HCT116 (cell line): ENCODE measurements at regions of chr6 and their contacts with region 1.

Region 1: DNA sequence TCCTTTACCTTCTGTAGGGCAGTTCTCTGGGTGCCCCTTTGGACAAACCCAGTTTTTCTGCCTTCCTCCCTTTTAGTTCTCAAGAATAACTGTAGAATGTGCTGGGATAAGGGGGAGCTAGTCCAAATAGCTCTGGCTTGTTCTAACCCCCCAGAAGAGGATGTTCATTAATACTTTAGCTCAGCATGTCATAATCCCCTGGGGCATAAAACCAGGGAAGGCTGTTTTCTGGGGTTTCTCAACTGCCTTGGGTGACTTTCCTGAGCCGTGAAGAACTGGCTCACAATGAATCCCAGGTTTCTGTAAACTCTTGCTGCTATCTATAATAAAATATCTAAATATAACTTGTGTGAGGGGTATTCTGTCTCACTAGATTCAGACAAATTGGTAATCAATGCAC is 44.5 kb upstream of the RNF217 start:
- DNase-seq: no peak
- ATAC-seq: no peak
- H3K4me3 ChIP-seq: no peak overlapping the region
- H3K27ac ChIP-seq: no peak overlapping the region
- H3K4me1 ChIP-seq: no peaks in the 10 kb centered on the region
- H3K27me3 ChIP-seq: no peaks in the 10 kb centered on the region
- CTCF ChIP-seq: no peak
- POLR2A ChIP-seq: no peak
- RAD21 ChIP-seq: no peak

Region 2: GRCh38 chr6:124943658-124944057 is 25.9 kb after region 1 on chr6:
- CTCF ChIA-PET with region 1: no interaction called
- POLR2A ChIA-PET with region 1: no interaction called
- RAD21 ChIA-PET with region 1: no interaction called
- intact Hi-C with region 1: loop called (anchors 1 kb)
- DNase-seq: no peak
- ATAC-seq: no peak
- H3K4me3 ChIP-seq: no peak overlapping the region
- H3K27ac ChIP-seq: no peak overlapping the region
- H3K4me1 ChIP-seq: peaks cover 0 to 6% of the 10 kb centered on the region in 2 experiments; a peak in 1 of 4 replicates
- H3K27me3 ChIP-seq: no peaks in the 10 kb centered on the region
- CTCF ChIP-seq: no peak
- POLR2A ChIP-seq: no peak
- RAD21 ChIP-seq: no peak

Region 3: DNA sequence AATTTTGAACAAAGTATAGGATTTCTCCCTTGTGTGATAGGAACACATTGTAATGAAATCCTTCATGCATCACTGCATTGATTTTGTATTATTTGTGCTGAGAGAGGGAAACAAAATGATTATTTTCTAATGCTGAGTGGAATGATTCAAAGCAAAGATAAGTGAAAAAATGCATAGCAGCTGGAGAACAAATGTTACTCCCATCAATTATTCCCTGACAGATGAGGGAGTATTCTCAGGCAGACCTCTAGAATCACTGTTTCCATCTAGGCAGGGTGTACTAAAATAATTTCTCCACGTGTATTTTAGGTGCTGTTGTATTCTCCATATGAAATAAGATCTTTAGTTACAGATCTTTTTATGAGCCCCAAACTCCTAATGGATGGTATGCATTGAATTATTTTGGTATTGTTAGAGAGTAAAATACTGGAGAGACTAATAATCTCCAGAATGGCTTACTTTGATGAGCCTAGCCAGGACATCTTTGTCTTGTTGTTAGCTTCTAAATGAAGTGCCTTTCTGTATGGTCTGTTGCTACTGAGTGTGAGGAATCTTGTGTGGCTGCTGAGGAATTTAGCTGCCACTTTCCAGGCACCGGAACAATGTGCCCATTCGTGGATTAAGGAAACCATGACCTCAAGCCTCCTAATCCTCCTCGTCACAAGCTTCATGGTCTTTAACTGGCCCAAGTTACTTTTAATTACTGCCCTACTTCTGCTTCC is 84.1 kb after region 1 on chr6:
- CTCF ChIA-PET with region 1: no interaction called
- POLR2A ChIA-PET with region 1: no interaction called
- RAD21 ChIA-PET with region 1: no interaction called
- intact Hi-C with region 1: no loop called
- DNase-seq: no peak
- ATAC-seq: no peak
- H3K4me3 ChIP-seq: no peak overlapping the region
- H3K27ac ChIP-seq: no peak overlapping the region
- H3K4me1 ChIP-seq: no peaks in the 10 kb centered on the region
- H3K27me3 ChIP-seq: no peaks in the 10 kb centered on the region
- CTCF ChIP-seq: no peak
- POLR2A ChIP-seq: no peak
- RAD21 ChIP-seq: no peak